CD4-positive, alpha-beta T cell (primary cell): ENCODE measurements at regions of chr3 and their contacts with region 1.

Region 1: GRCh38 chr3:195549931-195550519 is 6.9 kb upstream of the PPP1R2 start:
- DNase-seq: peak; percentile 69 to 94 (median 80)
- ATAC-seq: peak; percentile 78
- H3K4me3 ChIP-seq: peak overlapping the region; percentile 45
- H3K4me3 Mint-ChIP-seq: peak overlapping the region; percentile 83
- H3K27ac ChIP-seq: peak overlapping the region; percentile 80 to 81
- H3K27ac Mint-ChIP-seq: peak overlapping the region; percentile 93
- H3K4me1 ChIP-seq: peaks cover 92% of the 10 kb centered on the region
- H3K4me1 Mint-ChIP-seq: peaks cover 93% of the 10 kb centered on the region
- H3K27me3 ChIP-seq: no peaks in the 10 kb centered on the region
- H3K27me3 Mint-ChIP-seq: no peaks in the 10 kb centered on the region
- CTCF ChIP-seq: no peak

Region 2: GRCh38 chr3:194769020-194769643 is 780.9 kb before region 1 on chr3:
- CTCF ChIA-PET with region 1: no interaction called
- POLR2A ChIA-PET with region 1: no interaction called
- intact Hi-C with region 1: loop called in 1 of 2 experiments (anchors 5 kb)
- DNase-seq: peak; percentile 77 to 98 (median 88)
- ATAC-seq: peak; percentile 97
- H3K4me3 ChIP-seq: peak overlapping the region; percentile 43
- H3K4me3 Mint-ChIP-seq: peak overlapping the region; percentile 87
- H3K27ac ChIP-seq: peak overlapping the region; percentile 51 to 65
- H3K27ac Mint-ChIP-seq: peak overlapping the region; percentile 84
- H3K4me1 ChIP-seq: peaks cover 16% of the 10 kb centered on the region
- H3K4me1 Mint-ChIP-seq: peaks cover 22% of the 10 kb centered on the region
- H3K27me3 ChIP-seq: no peaks in the 10 kb centered on the region
- H3K27me3 Mint-ChIP-seq: peaks cover 5% of the 10 kb centered on the region
- CTCF ChIP-seq: no peak

Region 3: GRCh38 chr3:195522254-195523023 is 27.6 kb before region 1 on chr3:
- CTCF ChIA-PET with region 1: interaction called, 3 read pairs
- POLR2A ChIA-PET with region 1: interaction called, 18 read pairs
- intact Hi-C with region 1: no loop called
- DNase-seq: peak in 4 of 14 experiments; percentile 59 to 71 (median 63)
- ATAC-seq: peak; percentile 34
- H3K4me3 ChIP-seq: no peak overlapping the region
- H3K4me3 Mint-ChIP-seq: no peak overlapping the region
- H3K27ac ChIP-seq: no peak overlapping the region
- H3K27ac Mint-ChIP-seq: peak overlapping the region; percentile 82
- H3K4me1 ChIP-seq: peaks cover 28% of the 10 kb centered on the region
- H3K4me1 Mint-ChIP-seq: peaks cover 59% of the 10 kb centered on the region
- H3K27me3 ChIP-seq: no peaks in the 10 kb centered on the region
- H3K27me3 Mint-ChIP-seq: no peaks in the 10 kb centered on the region
- CTCF ChIP-seq: peak; percentile 93

Region 4: GRCh38 chr3:195612075-195612800 is 62.2 kb after region 1 on chr3:
- CTCF ChIA-PET with region 1: no interaction called
- POLR2A ChIA-PET with region 1: interaction called, 14 read pairs
- intact Hi-C with region 1: loop called in 1 of 2 experiments (anchors 5 kb)
- DNase-seq: no peak
- ATAC-seq: no peak
- H3K4me3 ChIP-seq: no peak overlapping the region
- H3K4me3 Mint-ChIP-seq: no peak overlapping the region
- H3K27ac ChIP-seq: no peak overlapping the region
- H3K27ac Mint-ChIP-seq: no peak overlapping the region
- H3K4me1 ChIP-seq: peaks cover 28% of the 10 kb centered on the region
- H3K4me1 Mint-ChIP-seq: peaks cover 54% of the 10 kb centered on the region
- H3K27me3 ChIP-seq: no peaks in the 10 kb centered on the region
- H3K27me3 Mint-ChIP-seq: no peaks in the 10 kb centered on the region
- CTCF ChIP-seq: no peak

Region 5: GRCh38 chr3:195900436-195901375 is 350.7 kb after region 1 on chr3:
- CTCF ChIA-PET with region 1: no interaction called
- POLR2A ChIA-PET with region 1: interaction called, 6 read pairs
- intact Hi-C with region 1: loop called (anchors 5 kb)
- DNase-seq: peak in 9 of 14 experiments; percentile 16 to 76 (median 51)
- ATAC-seq: peak; percentile 18
- H3K4me3 ChIP-seq: no peak overlapping the region
- H3K4me3 Mint-ChIP-seq: peak overlapping the region; percentile 42
- H3K27ac ChIP-seq: peak overlapping the region in 1 of 2 donors; percentile 20
- H3K27ac Mint-ChIP-seq: peak overlapping the region; percentile 80
- H3K4me1 ChIP-seq: peaks cover 80% of the 10 kb centered on the region
- H3K4me1 Mint-ChIP-seq: peaks cover 82% of the 10 kb centered on the region
- H3K27me3 ChIP-seq: no peaks in the 10 kb centered on the region
- H3K27me3 Mint-ChIP-seq: no peaks in the 10 kb centered on the region
- CTCF ChIP-seq: no peak